Activated CD4-positive, alpha-beta T cell treated with anti-CD3 and anti-CD28 coated beads, Interleukin-2, amount 10 ng/mL, durations not matched to agents 24 days and 14 days (primary cell): ENCODE measurements at regions of chr2 and their contacts with region 1.

Region 1: GRCh38 chr2:102436323-102436722 is 13.4 kb downstream of the IL18RAP start:
- DNase-seq: no peak
- H3K4me3 Mint-ChIP-seq: peak overlapping the region; percentile 43
- H3K27ac Mint-ChIP-seq: peak overlapping the region; percentile 87
- H3K4me1 Mint-ChIP-seq: peaks cover 33% of the 10 kb centered on the region
- H3K27me3 Mint-ChIP-seq: no peaks in the 10 kb centered on the region

Region 2: GRCh38 chr2:102258386-102259074 is 177.8 kb before region 1 on chr2:
- intact Hi-C with region 1: loop called (anchors 1 kb)
- DNase-seq: peak; percentile 82
- H3K4me3 Mint-ChIP-seq: peak overlapping the region; percentile 62
- H3K27ac Mint-ChIP-seq: peak overlapping the region; percentile 99
- H3K4me1 Mint-ChIP-seq: peaks cover 43% of the 10 kb centered on the region
- H3K27me3 Mint-ChIP-seq: no peaks in the 10 kb centered on the region

Region 3: DNA sequence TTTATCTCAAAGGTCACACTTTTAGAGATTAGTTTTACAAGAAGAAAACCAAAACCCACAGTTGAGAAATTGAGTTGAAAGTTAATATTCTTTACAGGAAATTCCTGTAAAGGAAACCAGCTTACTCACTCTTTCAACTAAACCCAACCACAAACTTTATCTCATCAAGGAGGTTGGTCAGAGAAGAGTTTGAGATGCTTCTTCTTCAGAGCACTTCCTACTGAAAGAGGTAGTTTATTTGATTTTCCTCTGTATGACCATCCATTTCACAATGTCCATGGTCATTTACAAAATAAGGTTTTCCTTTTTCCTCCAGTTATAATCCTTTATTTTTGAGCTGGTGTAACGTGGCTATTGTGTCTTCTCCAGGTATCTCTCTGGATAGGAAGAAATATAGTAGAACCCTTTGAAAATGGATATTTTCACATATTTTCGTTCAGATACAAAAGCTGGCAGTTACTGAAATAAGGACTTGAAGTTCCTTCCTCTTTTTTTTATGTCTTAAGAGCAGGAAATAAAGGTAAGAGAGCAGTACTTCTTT is 17.8 kb before region 1 on chr2:
- intact Hi-C with region 1: loop called (anchors 1 kb)
- DNase-seq: peak; percentile 79
- H3K4me3 Mint-ChIP-seq: peak overlapping the region; percentile 86
- H3K27ac Mint-ChIP-seq: peak overlapping the region; percentile 94
- H3K4me1 Mint-ChIP-seq: peaks cover 69% of the 10 kb centered on the region
- H3K27me3 Mint-ChIP-seq: no peaks in the 10 kb centered on the region